ENCODE measurements at regions of chr10 and their contacts with region 1.

Region 1: DNA sequence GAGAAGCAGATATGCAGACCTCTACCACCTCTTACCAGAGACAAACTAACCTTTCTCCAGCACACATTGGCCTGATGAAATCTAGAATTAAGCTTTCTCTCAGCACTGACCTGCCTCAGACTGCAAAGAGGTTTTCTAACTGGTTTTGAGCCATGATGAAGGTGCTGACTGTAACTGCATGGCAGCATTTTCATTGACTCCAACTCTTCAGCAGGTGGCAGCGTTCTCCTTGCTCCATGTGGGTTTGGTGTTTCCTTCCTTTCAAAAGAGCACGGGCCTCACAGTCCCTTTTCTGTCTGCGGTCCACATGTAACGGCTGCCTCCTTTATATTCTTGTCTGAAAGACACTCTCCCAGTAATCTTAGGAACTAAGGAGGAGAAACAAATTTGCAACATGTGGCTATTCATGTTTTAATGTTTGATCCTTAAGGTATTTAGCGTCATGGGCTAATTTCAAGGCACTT is 12.6 kb downstream of the KLLN start:
- DNase-seq: peak; percentile 55
- ATAC-seq: peak; percentile 97

Region 2: DNA sequence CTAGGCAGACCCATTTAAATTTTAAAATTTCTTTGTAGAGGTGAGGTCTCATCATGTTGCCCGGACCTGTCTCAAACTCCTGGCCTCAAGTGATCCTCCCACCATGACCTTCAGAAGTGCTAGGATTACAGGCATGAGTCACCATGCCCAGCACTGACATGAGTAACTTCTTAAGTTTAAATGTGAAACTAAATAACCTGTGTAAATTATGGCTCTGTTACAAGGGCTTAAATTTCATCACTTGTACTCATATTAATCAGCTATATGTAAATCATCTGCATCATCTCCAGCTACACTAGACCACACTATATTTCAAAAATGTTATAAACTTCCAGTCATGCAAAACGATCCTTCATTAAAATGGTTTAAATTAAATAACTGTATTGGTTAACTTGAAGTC is 88.9 kb before region 1 on chr10:
- intact Hi-C with region 1: no loop called
- DNase-seq: no peak
- ATAC-seq: peak; percentile 35

Region 3: DNA sequence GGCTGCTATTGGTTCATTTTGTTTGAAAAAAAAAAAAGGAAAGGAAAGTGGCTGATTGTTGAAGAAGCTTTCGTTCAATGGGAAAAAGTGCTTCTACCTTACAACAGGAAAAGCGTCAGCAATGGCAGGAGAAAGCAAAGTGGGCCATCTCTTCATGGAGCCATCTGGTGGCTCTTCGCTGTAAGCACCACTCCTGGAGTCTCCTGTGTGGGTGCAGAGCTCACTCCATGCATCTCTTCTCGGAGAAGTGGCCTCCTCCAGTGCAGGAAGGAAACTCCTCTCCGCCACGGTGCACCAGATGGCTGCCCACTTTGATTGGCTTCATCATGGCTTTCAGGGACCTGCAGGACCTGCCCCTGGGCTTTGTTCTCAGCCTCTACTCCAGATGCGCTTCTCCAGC is 263.6 kb after region 1 on chr10:
- intact Hi-C with region 1: loop called (anchors 5 kb)
- DNase-seq: peak; percentile 47
- ATAC-seq: peak; percentile 87

Measured in left ventricle myocardium superior (tissue), 1 donor.